MCF 10A (cell line): ENCODE measurements at regions of chr1 and their contacts with region 1.

Region 1: DNA sequence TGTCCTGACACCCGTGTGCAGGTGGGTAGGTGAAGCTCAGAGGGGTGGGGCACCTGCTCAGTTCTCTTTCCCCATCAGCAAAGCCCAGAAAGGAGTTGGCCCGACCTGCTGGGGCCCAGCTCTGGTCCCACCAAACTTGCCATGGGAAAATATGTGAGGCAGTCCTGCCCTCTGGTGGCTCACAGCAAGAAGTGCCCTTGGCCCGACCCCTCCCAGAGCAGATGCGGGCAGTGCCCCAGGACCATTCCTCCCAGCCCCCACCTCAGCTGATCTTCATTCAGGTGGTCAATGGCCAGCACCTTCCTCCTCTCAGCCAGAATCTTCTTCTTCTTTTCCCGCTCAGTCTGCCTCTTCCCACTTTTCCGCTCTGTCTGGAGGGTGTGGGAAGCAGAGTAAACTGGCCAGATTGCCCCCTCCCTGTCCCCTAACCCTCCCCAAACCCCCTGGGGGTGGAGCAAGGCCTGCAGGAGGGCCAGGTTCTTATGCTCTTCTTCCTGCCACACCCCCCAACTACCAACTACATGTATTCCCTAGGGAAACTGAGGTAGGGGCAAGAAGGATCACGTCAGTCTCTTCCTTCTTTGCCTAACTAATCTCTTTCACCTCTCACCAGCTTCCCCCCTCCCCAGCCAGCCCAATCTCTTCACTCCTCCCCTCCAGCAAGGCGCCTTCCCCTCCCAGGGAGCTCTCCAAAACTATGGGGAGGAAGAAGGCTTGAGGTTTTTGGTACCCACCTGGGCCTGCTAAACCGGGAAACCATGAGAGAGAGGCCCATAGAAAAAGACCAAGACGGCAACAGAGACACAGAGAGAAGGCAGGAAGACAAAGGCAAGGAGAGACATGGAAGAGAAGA is 15.6 kb downstream of the TNNT2 start:
- DNase-seq: peak; percentile 82
- H3K4me3 Mint-ChIP-seq: no peak overlapping the region
- H3K27ac Mint-ChIP-seq: no peak overlapping the region
- H3K4me1 Mint-ChIP-seq: peaks cover 24% of the 10 kb centered on the region
- H3K27me3 Mint-ChIP-seq: peaks cover 8% of the 10 kb centered on the region
- CTCF ChIP-seq: peak; percentile 100

Region 2: DNA sequence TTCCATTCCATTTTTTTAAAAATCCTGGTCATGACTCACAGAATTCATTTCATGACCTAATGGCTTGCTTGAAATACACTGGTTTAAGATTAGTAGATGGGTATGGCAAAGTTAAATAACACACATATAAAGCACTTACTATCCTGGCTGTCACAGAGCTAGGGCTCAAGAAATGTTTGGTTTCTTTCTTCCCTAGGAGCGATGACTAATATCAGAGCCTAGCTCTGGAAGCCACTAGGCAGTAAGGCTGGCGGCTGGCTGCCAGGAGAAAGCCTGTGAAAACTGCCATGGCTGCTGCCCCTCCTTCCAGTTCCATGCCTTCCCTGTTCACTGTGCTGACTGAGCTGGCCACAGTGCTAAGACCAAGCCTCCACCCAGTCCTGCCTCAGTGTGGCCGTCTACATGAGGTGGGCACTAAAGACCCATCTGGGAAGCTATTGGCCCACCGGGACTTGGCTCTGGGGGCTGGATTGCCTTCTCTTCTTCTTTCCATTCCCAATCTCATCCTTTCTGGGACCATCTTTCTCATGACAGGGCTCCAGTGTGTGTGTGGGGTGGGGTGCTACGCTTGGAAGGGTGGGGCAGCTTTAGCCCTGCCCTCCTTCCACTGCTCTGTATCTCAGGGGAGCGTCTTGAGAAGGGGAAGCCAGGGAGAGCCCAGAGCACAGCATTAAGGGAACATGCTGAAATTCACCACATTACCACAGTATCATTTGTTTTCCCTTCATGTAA is 224.1 kb before region 1 on chr1:
- CTCF ChIA-PET with region 1: interaction called, 13 read pairs
- POLR2A ChIA-PET with region 1: no interaction called
- intact Hi-C with region 1: no loop called
- DNase-seq: peak; percentile 78
- H3K4me3 Mint-ChIP-seq: no peak overlapping the region
- H3K27ac Mint-ChIP-seq: no peak overlapping the region
- H3K4me1 Mint-ChIP-seq: peaks cover 11% of the 10 kb centered on the region
- H3K27me3 Mint-ChIP-seq: no peaks in the 10 kb centered on the region
- CTCF ChIP-seq: no peak

Region 3: DNA sequence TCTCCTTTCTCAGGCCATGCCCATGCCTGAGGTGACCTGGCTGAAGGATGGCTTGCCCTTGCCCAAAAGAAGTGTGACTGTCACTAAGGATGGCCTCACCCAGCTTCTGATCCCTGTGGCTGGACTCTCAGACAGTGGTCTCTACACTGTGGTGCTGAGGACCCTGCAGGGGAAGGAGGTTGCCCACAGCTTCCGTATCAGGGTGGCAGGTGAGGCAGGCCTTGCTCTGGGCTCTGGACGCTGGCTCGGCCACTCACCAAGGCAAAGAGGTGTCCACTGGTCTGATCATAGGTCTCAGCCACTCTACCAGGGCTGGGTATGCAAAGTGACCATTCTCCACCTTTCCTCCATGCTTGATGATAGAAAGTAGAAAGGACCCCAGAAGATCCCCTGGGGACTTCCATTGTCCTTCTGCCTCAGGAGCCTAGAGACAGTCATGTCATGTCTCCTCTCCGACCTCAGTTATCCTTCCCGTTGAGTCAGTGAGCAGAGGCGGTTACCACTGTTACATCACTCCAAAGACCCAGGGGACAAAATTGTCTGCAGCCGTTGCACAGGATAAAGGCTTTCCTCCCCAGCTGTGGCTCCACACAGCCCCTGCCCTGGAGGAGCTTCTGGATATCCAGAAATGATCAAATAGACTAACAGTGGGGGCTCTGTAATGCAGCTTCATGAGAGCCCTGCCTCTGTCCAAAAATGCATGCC is 137.1 kb before region 1 on chr1:
- CTCF ChIA-PET with region 1: interaction called, 7 read pairs
- POLR2A ChIA-PET with region 1: no interaction called
- intact Hi-C with region 1: loop called (anchors 1 kb)
- DNase-seq: no peak
- H3K4me3 Mint-ChIP-seq: no peak overlapping the region
- H3K27ac Mint-ChIP-seq: no peak overlapping the region
- H3K4me1 Mint-ChIP-seq: peaks cover 1% of the 10 kb centered on the region
- H3K27me3 Mint-ChIP-seq: no peaks in the 10 kb centered on the region
- CTCF ChIP-seq: no peak

Region 4: GRCh38 chr1:201275041-201275676 is 86.7 kb before region 1 on chr1:
- CTCF ChIA-PET with region 1: interaction called, 23 read pairs
- POLR2A ChIA-PET with region 1: interaction called, 6 read pairs
- intact Hi-C with region 1: no loop called
- DNase-seq: peak; percentile 100
- H3K4me3 Mint-ChIP-seq: no peak overlapping the region
- H3K27ac Mint-ChIP-seq: peak overlapping the region; percentile 79
- H3K4me1 Mint-ChIP-seq: peaks cover 52% of the 10 kb centered on the region
- H3K27me3 Mint-ChIP-seq: no peaks in the 10 kb centered on the region
- CTCF ChIP-seq: no peak

Region 5: DNA sequence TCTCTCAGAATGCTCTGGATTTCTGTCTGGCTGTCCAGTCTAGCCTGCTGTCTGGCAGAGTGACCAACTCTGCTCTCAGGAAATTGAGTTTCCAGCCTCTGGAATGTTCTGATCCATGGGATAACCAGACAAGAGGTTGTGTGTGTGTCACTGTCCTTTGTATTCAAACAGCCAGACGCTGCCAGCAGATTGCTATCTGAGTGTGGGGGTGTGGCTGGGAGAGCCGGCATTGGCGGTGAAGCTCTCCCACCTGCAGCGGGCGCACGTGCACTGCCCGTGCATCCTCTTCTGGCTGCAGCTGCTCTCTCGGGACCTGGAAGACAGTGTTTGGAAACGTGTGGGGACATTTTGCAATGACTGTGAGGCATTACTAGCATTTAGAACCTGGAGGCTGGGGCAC is 52.5 kb before region 1 on chr1:
- CTCF ChIA-PET with region 1: interaction called, 395 read pairs
- POLR2A ChIA-PET with region 1: interaction called, 159 read pairs
- intact Hi-C with region 1: loop called (anchors 1 kb)
- DNase-seq: peak; percentile 98
- H3K4me3 Mint-ChIP-seq: peak overlapping the region; percentile 1
- H3K27ac Mint-ChIP-seq: peak overlapping the region; percentile 97
- H3K4me1 Mint-ChIP-seq: peaks cover 71% of the 10 kb centered on the region
- H3K27me3 Mint-ChIP-seq: no peaks in the 10 kb centered on the region
- CTCF ChIP-seq: peak; percentile 38

Region 6: DNA sequence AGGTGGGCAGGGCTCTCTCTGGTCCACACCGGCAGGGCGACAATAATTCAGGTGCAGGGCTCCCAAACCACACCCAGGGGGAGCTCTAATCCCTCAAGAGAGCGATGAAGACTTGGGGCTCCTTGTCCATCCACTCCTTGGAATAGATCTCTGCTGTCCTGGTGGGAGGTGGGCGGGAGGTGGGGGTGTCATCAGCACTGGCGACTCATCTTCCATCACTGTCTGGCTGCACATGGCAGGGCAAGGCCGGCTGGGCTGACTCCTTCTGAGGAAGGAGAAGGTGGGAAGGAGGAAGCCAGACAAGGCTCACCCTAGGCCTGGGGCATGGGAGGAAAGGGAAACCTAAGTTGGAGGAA is 13.7 kb before region 1 on chr1:
- CTCF ChIA-PET with region 1: interaction called, 314 read pairs
- POLR2A ChIA-PET with region 1: interaction called, 24 read pairs
- intact Hi-C with region 1: loop called (anchors 1 kb)
- DNase-seq: peak; percentile 92
- H3K4me3 Mint-ChIP-seq: no peak overlapping the region
- H3K27ac Mint-ChIP-seq: no peak overlapping the region
- H3K4me1 Mint-ChIP-seq: peaks cover 24% of the 10 kb centered on the region
- H3K27me3 Mint-ChIP-seq: peaks cover 10% of the 10 kb centered on the region
- CTCF ChIP-seq: peak; percentile 92

Region 7: GRCh38 chr1:201408176-201408833 is 46.4 kb after region 1 on chr1:
- CTCF ChIA-PET with region 1: interaction called, 22 read pairs
- POLR2A ChIA-PET with region 1: interaction called, 3 read pairs
- intact Hi-C with region 1: no loop called
- DNase-seq: peak; percentile 90
- H3K4me3 Mint-ChIP-seq: no peak overlapping the region
- H3K27ac Mint-ChIP-seq: no peak overlapping the region
- H3K4me1 Mint-ChIP-seq: peaks cover 5% of the 10 kb centered on the region
- H3K27me3 Mint-ChIP-seq: peaks cover 32% of the 10 kb centered on the region
- CTCF ChIP-seq: peak; percentile 100